ENCODE measurements at regions of chr19 and their contacts with region 1.

Region 1: GRCh38 chr19:48492925-48493717 is 18.5 kb downstream of the LMTK3 start:
- DNase-seq: peak; percentile 93 to 95 (median 94)
- H3K4me3 ChIP-seq: peak overlapping the region; percentile 46 to 80 (median 46)
- H3K4me3 Mint-ChIP-seq: peak overlapping the region; percentile 79 to 92
- H3K27ac ChIP-seq: peak overlapping the region in 1 of 2 donors; percentile 45
- H3K27ac Mint-ChIP-seq: peak overlapping the region; percentile 86 to 98 (median 93)
- H3K4me1 ChIP-seq: peaks cover 36 to 49% of the 10 kb centered on the region in 2 donors
- H3K4me1 Mint-ChIP-seq: peaks cover 42% of the 10 kb centered on the region
- H3K27me3 ChIP-seq: peaks cover 21 to 47% of the 10 kb centered on the region in 2 donors
- H3K27me3 Mint-ChIP-seq: peaks cover 56 to 77% (median 58%) of the 10 kb centered on the region in 3 donors
- CTCF ChIP-seq: no peak

Region 2: GRCh38 chr19:48468775-48469288 is 24.3 kb before region 1 on chr19:
- intact Hi-C with region 1: loop called (anchors 2 kb)
- DNase-seq: peak; percentile 100
- H3K4me3 ChIP-seq: peak overlapping the region; percentile 73 to 98 (median 80)
- H3K4me3 Mint-ChIP-seq: peak overlapping the region; percentile 78 to 88
- H3K27ac ChIP-seq: peak overlapping the region in 1 of 2 donors; percentile 59
- H3K27ac Mint-ChIP-seq: peak overlapping the region; percentile 56 to 92 (median 83)
- H3K4me1 ChIP-seq: peaks cover 12 to 19% of the 10 kb centered on the region in 2 donors
- H3K4me1 Mint-ChIP-seq: peaks cover 20% of the 10 kb centered on the region
- H3K27me3 ChIP-seq: no peaks in the 10 kb centered on the region
- H3K27me3 Mint-ChIP-seq: peaks cover 1 to 3% (median 2%) of the 10 kb centered on the region in 3 donors
- CTCF ChIP-seq: no peak

Region 3: GRCh38 chr19:48588670-48589399 is 95.7 kb after region 1 on chr19:
- intact Hi-C with region 1: loop called (anchors 1 to 2 kb)
- DNase-seq: peak; percentile 83 to 90 (median 85)
- H3K4me3 ChIP-seq: peak overlapping the region; percentile 17 to 72 (median 41)
- H3K4me3 Mint-ChIP-seq: peak overlapping the region; percentile 83 to 96
- H3K27ac ChIP-seq: peak overlapping the region; percentile 56 to 64
- H3K27ac Mint-ChIP-seq: peak overlapping the region; percentile 57 to 92 (median 85)
- H3K4me1 ChIP-seq: peaks cover 13 to 15% of the 10 kb centered on the region in 2 donors
- H3K4me1 Mint-ChIP-seq: peaks cover 17% of the 10 kb centered on the region
- H3K27me3 ChIP-seq: no peaks in the 10 kb centered on the region
- H3K27me3 Mint-ChIP-seq: peaks cover 6 to 9% (median 9%) of the 10 kb centered on the region in 3 donors
- CTCF ChIP-seq: peak; percentile 95

Region 4: GRCh38 chr19:48608798-48609263 is 115.7 kb after region 1 on chr19:
- intact Hi-C with region 1: loop called in 1 of 2 experiments (anchors 2 kb)
- DNase-seq: peak; percentile 47 to 72 (median 55)
- H3K4me3 ChIP-seq: peak overlapping the region in 1 of 3 experiments; percentile 48
- H3K4me3 Mint-ChIP-seq: peak overlapping the region; percentile 65 to 83
- H3K27ac ChIP-seq: no peak overlapping the region
- H3K27ac Mint-ChIP-seq: peak overlapping the region in 2 of 7 donors; percentile 30 to 52
- H3K4me1 ChIP-seq: peaks cover 3 to 7% of the 10 kb centered on the region in 2 donors
- H3K4me1 Mint-ChIP-seq: peaks cover 5% of the 10 kb centered on the region
- H3K27me3 ChIP-seq: no peaks in the 10 kb centered on the region
- H3K27me3 Mint-ChIP-seq: peaks cover 3 to 5% (median 4%) of the 10 kb centered on the region in 3 donors
- CTCF ChIP-seq: peak; percentile 70

Measured in CD14-positive monocyte (primary cell).